ENCODE measurements at regions of chr1 and their contacts with region 1.

Region 1: DNA sequence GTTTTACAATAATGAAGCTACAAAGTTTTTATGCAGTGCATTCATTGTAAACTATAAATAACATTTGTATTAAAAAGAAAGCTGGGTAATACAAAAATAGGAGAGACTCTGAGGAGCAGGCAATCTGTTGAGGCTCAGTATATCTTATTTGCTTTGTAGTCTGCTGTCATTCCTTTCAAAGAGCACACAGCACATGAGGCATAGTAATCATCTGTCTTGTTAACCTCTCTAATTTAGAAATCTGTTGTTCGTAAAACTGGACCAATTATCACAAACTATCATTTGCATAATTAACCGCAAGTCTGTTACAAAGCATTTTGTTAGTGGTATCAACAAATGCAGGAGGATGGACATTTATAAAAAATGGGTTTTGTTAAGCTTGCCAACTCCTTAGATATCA is 51.0 kb downstream of the SELENOF start:
- DNase-seq: no peak
- H3K4me3 ChIP-seq: no peak overlapping the region
- H3K27ac ChIP-seq: no peak overlapping the region
- H3K4me1 ChIP-seq: no peaks in the 10 kb centered on the region
- H3K27me3 ChIP-seq: no peaks in the 10 kb centered on the region
- CTCF ChIP-seq: no peak
- POLR2A ChIP-seq: no peak

Region 2: DNA sequence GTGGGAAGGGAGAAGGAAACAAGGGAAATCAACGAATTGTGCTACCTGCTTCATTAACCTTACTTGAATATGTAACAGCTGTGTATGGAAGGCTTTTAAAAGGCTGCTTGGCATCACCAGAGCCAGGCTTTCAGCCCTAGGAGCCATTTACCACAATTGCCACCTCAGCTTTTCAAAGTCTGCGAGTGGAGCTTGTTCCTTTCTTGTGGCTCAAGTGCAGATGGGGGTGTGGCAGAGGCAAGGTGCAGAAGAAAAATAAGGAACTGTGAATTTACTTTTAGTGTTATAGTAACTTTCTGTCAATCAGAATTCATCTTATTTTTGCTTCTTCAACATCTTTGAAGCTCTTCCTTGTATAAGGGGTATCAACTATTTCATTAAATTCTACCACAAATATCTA is 421.3 kb before region 1 on chr1:
- CTCF ChIA-PET with region 1: no interaction called
- POLR2A ChIA-PET with region 1: no interaction called
- dilution Hi-C with region 1: no loop called
- intact Hi-C with region 1: no loop called
- DNase-seq: no peak
- H3K4me3 ChIP-seq: no peak overlapping the region
- H3K27ac ChIP-seq: no peak overlapping the region
- H3K4me1 ChIP-seq: no peaks in the 10 kb centered on the region
- H3K27me3 ChIP-seq: peaks cover 6 to 12% of the 10 kb centered on the region in 2 experiments
- CTCF ChIP-seq: no peak
- POLR2A ChIP-seq: no peak

Region 3: DNA sequence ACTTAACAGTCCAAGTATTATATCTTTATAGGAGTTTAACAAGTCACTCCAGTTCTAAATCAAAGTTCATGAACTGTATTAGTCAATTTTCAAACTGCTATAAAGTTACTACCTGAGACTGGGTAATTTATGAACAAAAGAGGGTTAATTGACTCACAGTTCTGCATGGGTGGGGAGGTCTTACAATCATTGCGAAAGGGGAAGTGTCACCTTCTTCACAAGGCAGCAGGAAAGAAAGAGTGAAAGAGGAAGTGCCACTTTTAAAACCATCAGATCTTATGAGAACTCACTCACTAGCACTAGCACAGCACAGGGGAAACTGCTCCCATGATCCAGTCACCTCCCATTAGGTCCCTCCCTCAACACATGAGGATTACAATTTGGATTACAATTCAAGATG is 246.0 kb before region 1 on chr1:
- CTCF ChIA-PET with region 1: no interaction called
- POLR2A ChIA-PET with region 1: no interaction called
- dilution Hi-C with region 1: no loop called
- intact Hi-C with region 1: no loop called
- DNase-seq: no peak
- H3K4me3 ChIP-seq: no peak overlapping the region
- H3K27ac ChIP-seq: no peak overlapping the region
- H3K4me1 ChIP-seq: no peaks in the 10 kb centered on the region
- H3K27me3 ChIP-seq: peaks cover 0 to 11% of the 10 kb centered on the region in 2 experiments
- CTCF ChIP-seq: no peak
- POLR2A ChIP-seq: no peak

Region 4: GRCh38 chr1:86875722-86876121 is 12.8 kb after region 1 on chr1:
- CTCF ChIA-PET with region 1: interaction called, 5 read pairs
- POLR2A ChIA-PET with region 1: no interaction called
- dilution Hi-C with region 1: no loop called
- intact Hi-C with region 1: loop called (anchors 2 kb)
- DNase-seq: no peak
- H3K4me3 ChIP-seq: no peak overlapping the region
- H3K27ac ChIP-seq: no peak overlapping the region
- H3K4me1 ChIP-seq: no peaks in the 10 kb centered on the region
- H3K27me3 ChIP-seq: no peaks in the 10 kb centered on the region
- CTCF ChIP-seq: no peak
- POLR2A ChIP-seq: no peak